Activated T-helper 2 cell treated with anti-CD3 and anti-CD28 coated beads, Interferon-gamma antibody, Interleukin-2, Interleukin-4, amounts not matched to agents 10 μg/mL and 5 μg/mL and 100 μg/mL, durations not matched to agents 14 hours and 24 hours and 36 hours (primary cell): ENCODE measurements at regions of chr3 and their contacts with region 1.

Region 1: GRCh38 chr3:67654099-67654843 is at the start of gene SUCLG2:
- DNase-seq: peak; percentile 80
- H3K4me3 Mint-ChIP-seq: peak within 1 kb of the TSS; percentile 78
- H3K27ac Mint-ChIP-seq: peak within 1 kb of the TSS; percentile 76
- H3K4me1 Mint-ChIP-seq: peaks cover 51% of the 10 kb centered on the region
- H3K27me3 Mint-ChIP-seq: peaks cover 4% of the 10 kb centered on the region
- total RNA-seq, gene SUCLG2: 36.3 and 38.1 TPM in 2 replicates

Region 2: GRCh38 chr3:66998113-66998903 is 656.0 kb before region 1 on chr3 and contains the start of gene KBTBD8:
- intact Hi-C with region 1: loop called (anchors 10 kb)
- DNase-seq: peak; percentile 98
- H3K4me3 Mint-ChIP-seq: peak within 1 kb of the TSS; percentile 95
- H3K27ac Mint-ChIP-seq: peak within 1 kb of the TSS; percentile 86
- H3K4me1 Mint-ChIP-seq: peaks cover 27% of the 10 kb centered on the region
- H3K27me3 Mint-ChIP-seq: peaks cover 14% of the 10 kb centered on the region
- total RNA-seq, gene KBTBD8: 10.4 and 13.4 TPM in 2 replicates

Region 3: DNA sequence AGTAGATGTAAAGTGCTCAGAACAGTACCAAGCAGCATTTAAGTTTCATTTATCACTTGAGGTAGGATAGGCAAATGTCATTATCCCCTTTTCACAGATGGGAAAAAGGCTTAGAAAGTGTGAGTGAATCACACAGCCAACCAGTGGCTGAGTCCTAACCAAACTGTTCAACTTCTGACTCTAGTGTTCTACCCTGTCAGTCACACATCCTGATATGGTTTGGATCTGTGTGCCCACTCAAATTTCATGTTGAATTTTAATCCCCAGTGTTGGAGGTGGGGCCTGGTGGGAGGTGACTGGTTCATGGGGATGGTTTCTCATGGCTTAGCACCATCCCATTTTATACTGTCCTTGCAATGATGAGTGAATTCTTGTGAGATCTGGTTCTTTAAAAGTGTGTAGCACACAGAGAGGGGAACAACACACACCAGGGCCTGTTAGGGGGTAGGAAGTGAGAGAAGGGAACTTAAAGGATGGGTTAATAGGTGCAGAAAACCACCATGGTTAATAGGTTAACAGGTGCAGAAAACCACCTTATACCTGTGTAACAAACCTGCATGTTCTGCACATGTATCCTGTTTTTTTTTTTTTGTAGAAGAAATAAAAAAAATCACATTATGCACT is 304.6 kb before region 1 on chr3:
- intact Hi-C with region 1: loop called (anchors 5 kb)
- DNase-seq: no peak
- H3K4me3 Mint-ChIP-seq: no peak overlapping the region
- H3K27ac Mint-ChIP-seq: peak overlapping the region; percentile 29
- H3K4me1 Mint-ChIP-seq: peaks cover 10% of the 10 kb centered on the region
- H3K27me3 Mint-ChIP-seq: peaks cover 9% of the 10 kb centered on the region

Region 4: DNA sequence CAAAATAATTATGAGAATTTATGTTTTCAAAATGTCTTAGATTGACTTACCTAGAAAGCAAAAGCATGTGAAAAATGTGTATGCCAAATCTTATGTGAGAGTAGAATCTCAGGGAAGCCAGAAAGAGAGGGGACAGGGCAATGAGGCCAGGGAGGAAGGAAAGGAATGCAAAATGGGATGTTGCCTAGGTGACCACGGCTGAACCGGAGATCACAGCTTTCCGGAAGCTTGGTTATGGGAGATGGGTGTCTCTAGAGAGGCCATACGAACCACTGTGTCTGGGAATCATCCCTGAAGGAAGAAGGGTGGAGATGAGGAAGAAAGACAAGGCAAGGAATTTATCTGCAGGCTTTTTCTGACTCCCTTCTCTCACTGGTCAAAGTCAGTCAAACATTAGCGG is 75.9 kb before region 1 on chr3:
- intact Hi-C with region 1: no loop called
- DNase-seq: no peak
- H3K4me3 Mint-ChIP-seq: no peak overlapping the region
- H3K27ac Mint-ChIP-seq: no peak overlapping the region
- H3K4me1 Mint-ChIP-seq: peaks cover 1% of the 10 kb centered on the region
- H3K27me3 Mint-ChIP-seq: no peaks in the 10 kb centered on the region

Region 5: GRCh38 chr3:67601911-67602608 is 52.2 kb before region 1 on chr3:
- intact Hi-C with region 1: loop called (anchors 5 kb)
- DNase-seq: no peak
- H3K4me3 Mint-ChIP-seq: peak overlapping the region; percentile 51
- H3K27ac Mint-ChIP-seq: peak overlapping the region; percentile 51
- H3K4me1 Mint-ChIP-seq: peaks cover 48% of the 10 kb centered on the region
- H3K27me3 Mint-ChIP-seq: no peaks in the 10 kb centered on the region

Region 6: GRCh38 chr3:69084326-69085167 is 1430.3 kb after region 1 on chr3 and contains the start of gene ARL6IP5:
- intact Hi-C with region 1: loop called (anchors 10 kb)
- DNase-seq: peak; percentile 89
- H3K4me3 Mint-ChIP-seq: peak within 1 kb of the TSS; percentile 96
- H3K27ac Mint-ChIP-seq: peak within 1 kb of the TSS; percentile 98
- H3K4me1 Mint-ChIP-seq: peaks cover 53% of the 10 kb centered on the region
- H3K27me3 Mint-ChIP-seq: no peaks in the 10 kb centered on the region
- total RNA-seq, gene ARL6IP5: 124 and 127 TPM in 2 replicates